MCF 10A (cell line): ENCODE measurements at regions of chr9 and their contacts with region 1.

Region 1: GRCh38 chr9:37920471-37921167 is 16.7 kb upstream of the SLC25A51 start:
- DNase-seq: no peak
- H3K4me3 Mint-ChIP-seq: no peak overlapping the region
- H3K27ac Mint-ChIP-seq: peak overlapping the region; percentile 85
- H3K4me1 Mint-ChIP-seq: peaks cover 15% of the 10 kb centered on the region
- H3K27me3 Mint-ChIP-seq: no peaks in the 10 kb centered on the region
- CTCF ChIP-seq: no peak

Region 2: GRCh38 chr9:37209431-37210386 is 710.9 kb before region 1 on chr9:
- CTCF ChIA-PET with region 1: no interaction called
- POLR2A ChIA-PET with region 1: no interaction called
- intact Hi-C with region 1: no loop called
- DNase-seq: no peak
- H3K4me3 Mint-ChIP-seq: no peak overlapping the region
- H3K27ac Mint-ChIP-seq: peak overlapping the region; percentile 69
- H3K4me1 Mint-ChIP-seq: no peaks in the 10 kb centered on the region
- H3K27me3 Mint-ChIP-seq: no peaks in the 10 kb centered on the region
- CTCF ChIP-seq: no peak

Region 3: GRCh38 chr9:37820142-37820541 is 100.5 kb before region 1 on chr9:
- CTCF ChIA-PET with region 1: no interaction called
- POLR2A ChIA-PET with region 1: no interaction called
- intact Hi-C with region 1: no loop called
- DNase-seq: no peak
- H3K4me3 Mint-ChIP-seq: no peak overlapping the region
- H3K27ac Mint-ChIP-seq: no peak overlapping the region
- H3K4me1 Mint-ChIP-seq: no peaks in the 10 kb centered on the region
- H3K27me3 Mint-ChIP-seq: no peaks in the 10 kb centered on the region
- CTCF ChIP-seq: no peak

Region 4: GRCh38 chr9:37862530-37862929 is 58.1 kb before region 1 on chr9:
- CTCF ChIA-PET with region 1: no interaction called
- POLR2A ChIA-PET with region 1: no interaction called
- intact Hi-C with region 1: no loop called
- DNase-seq: no peak
- H3K4me3 Mint-ChIP-seq: no peak overlapping the region
- H3K27ac Mint-ChIP-seq: no peak overlapping the region
- H3K4me1 Mint-ChIP-seq: no peaks in the 10 kb centered on the region
- H3K27me3 Mint-ChIP-seq: no peaks in the 10 kb centered on the region
- CTCF ChIP-seq: no peak

Region 5: DNA sequence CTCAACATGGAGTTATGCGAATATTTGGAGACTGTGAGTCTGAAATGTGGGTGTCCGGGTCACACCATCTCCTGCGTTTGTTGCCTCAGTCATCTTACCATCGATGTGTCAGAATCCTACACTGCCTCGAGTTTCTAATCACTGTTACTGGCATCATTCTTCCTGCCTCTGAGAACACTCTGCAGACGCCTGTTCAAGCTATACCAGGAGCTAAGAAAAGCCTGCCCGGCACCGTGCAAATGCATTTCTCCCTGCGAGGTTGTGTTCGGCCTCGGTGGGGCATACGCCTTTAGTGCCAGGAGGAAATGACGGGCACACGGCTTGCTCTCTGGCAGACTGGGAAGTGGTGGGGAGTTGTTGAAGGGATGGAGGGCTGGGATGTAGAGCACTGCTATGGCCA is 14.5 kb after region 1 on chr9:
- CTCF ChIA-PET with region 1: interaction called, 22 read pairs
- POLR2A ChIA-PET with region 1: interaction called, 7 read pairs
- intact Hi-C with region 1: no loop called
- DNase-seq: no peak
- H3K4me3 Mint-ChIP-seq: no peak overlapping the region
- H3K27ac Mint-ChIP-seq: no peak overlapping the region
- H3K4me1 Mint-ChIP-seq: peaks cover 24% of the 10 kb centered on the region
- H3K27me3 Mint-ChIP-seq: no peaks in the 10 kb centered on the region
- CTCF ChIP-seq: no peak

Region 6: GRCh38 chr9:37994639-37995347 is 74.2 kb after region 1 on chr9:
- CTCF ChIA-PET with region 1: interaction called, 23 read pairs
- POLR2A ChIA-PET with region 1: no interaction called
- intact Hi-C with region 1: no loop called
- DNase-seq: peak; percentile 72
- H3K4me3 Mint-ChIP-seq: peak overlapping the region; percentile 59
- H3K27ac Mint-ChIP-seq: peak overlapping the region; percentile 55
- H3K4me1 Mint-ChIP-seq: peaks cover 37% of the 10 kb centered on the region
- H3K27me3 Mint-ChIP-seq: no peaks in the 10 kb centered on the region
- CTCF ChIP-seq: no peak

Region 7: GRCh38 chr9:38026021-38026809 is 105.6 kb after region 1 on chr9:
- CTCF ChIA-PET with region 1: interaction called, 15 read pairs
- POLR2A ChIA-PET with region 1: interaction called, 13 read pairs
- intact Hi-C with region 1: no loop called
- DNase-seq: peak; percentile 88
- H3K4me3 Mint-ChIP-seq: peak overlapping the region; percentile 38
- H3K27ac Mint-ChIP-seq: peak overlapping the region; percentile 83
- H3K4me1 Mint-ChIP-seq: peaks cover 44% of the 10 kb centered on the region
- H3K27me3 Mint-ChIP-seq: no peaks in the 10 kb centered on the region
- CTCF ChIP-seq: no peak

Region 8: DNA sequence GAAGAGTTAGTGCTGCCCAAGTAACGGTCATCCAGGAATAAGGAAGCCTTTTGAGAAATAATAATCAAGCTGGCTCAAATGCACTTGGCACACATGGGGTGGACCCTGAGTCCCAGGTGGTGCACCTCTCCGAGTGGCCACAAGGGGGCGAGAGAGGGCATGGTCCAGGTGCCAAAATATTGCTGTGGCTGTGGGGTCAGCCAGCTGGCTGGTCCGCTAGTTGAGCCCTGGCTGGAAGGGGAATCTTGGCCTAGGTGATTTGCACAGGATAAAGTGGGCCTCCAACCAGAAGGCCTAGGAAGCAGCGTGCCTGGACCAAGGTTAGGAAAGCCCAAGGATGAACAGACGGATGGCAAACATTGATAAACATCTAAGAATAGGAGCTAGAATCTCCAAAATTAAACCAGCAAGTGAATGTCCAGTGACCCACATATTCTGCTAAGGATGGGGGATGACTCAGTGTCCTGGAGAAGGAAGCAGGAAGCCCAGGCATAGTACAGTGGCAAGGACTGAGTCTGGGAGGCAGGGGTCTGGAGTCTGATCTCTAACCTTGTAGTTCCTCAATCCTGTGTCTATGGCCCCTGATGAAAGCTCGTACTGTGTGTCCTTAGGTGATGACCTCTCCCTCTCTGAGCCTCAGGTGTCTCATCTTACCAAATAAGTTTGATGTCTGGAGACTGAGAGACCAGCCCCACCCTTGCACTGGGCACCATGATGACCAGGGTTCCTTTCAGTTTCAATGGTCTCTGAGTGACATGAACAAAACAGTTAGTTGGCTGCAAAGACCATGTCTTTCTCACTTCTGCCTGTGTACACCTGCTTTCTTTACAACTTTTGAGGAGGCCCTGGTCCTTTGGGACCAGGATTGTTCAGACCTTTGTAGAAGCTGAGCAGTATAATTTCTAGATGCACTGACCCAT is 167.6 kb after region 1 on chr9:
- CTCF ChIA-PET with region 1: interaction called, 34 read pairs
- POLR2A ChIA-PET with region 1: no interaction called
- intact Hi-C with region 1: no loop called
- DNase-seq: peak; percentile 66
- H3K4me3 Mint-ChIP-seq: no peak overlapping the region
- H3K27ac Mint-ChIP-seq: no peak overlapping the region
- H3K4me1 Mint-ChIP-seq: no peaks in the 10 kb centered on the region
- H3K27me3 Mint-ChIP-seq: no peaks in the 10 kb centered on the region
- CTCF ChIP-seq: peak; percentile 97